HEK293 (cell line): ENCODE measurements at regions of chr12 and their contacts with region 1.

Region 1: DNA sequence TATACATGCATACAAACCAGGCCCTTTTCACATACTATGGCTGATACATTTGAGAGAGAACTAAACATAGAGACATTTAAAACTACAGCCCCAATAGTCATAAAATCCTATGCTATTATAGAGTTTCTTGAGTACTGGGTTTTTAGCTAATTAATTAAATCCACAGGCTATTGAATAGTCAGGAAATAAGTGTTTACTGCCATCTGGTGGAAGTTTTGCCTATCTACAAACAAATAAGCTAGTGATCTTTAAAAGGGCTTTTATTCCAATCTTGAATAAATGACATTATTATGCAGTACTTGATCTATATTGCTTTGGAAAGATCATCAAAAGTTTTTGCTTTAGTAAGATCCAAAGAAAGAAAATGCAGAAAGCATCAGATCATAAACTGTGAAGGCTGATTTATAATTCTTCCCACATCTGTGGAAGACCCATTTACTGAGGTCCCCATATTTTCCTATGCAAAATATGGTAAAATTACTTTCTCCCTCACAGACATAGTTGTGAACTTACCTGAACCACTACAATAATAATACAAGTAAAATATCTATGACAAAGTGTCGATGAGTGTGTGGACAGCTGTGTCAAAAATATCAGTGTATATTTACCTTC is 131.3 kb downstream of the ITPR2 start:
- H3K4me3 ChIP-seq: no peak overlapping the region
- H3K27ac ChIP-seq: no peak overlapping the region
- H3K4me1 ChIP-seq: peaks cover 5% of the 10 kb centered on the region; the same call in 1 of the 2 replicates
- CTCF ChIP-seq: no peak; the same call in 1 of the 2 replicates

Region 2: GRCh38 chr12:26651566-26652188 is 50.0 kb before region 1 on chr12:
- CTCF ChIA-PET with region 1: interaction called, 13 read pairs
- POLR2A ChIA-PET with region 1: no interaction called
- H3K4me3 ChIP-seq: no peak overlapping the region
- H3K27ac ChIP-seq: no peak overlapping the region
- H3K4me1 ChIP-seq: no peaks in the 10 kb centered on the region
- CTCF ChIP-seq: peak; percentile 57

Region 3: GRCh38 chr12:26691234-26691970 is 10.3 kb before region 1 on chr12:
- CTCF ChIA-PET with region 1: interaction called, 11 read pairs
- POLR2A ChIA-PET with region 1: no interaction called
- H3K4me3 ChIP-seq: no peak overlapping the region
- H3K27ac ChIP-seq: no peak overlapping the region
- H3K4me1 ChIP-seq: no peaks in the 10 kb centered on the region; the same call in 1 of the 2 replicates
- CTCF ChIP-seq: peak; percentile 20; the same call in 1 of the 2 replicates